Mammary epithelial cell (primary cell): ENCODE measurements at regions of chr5 and their contacts with region 1.

Region 1: DNA sequence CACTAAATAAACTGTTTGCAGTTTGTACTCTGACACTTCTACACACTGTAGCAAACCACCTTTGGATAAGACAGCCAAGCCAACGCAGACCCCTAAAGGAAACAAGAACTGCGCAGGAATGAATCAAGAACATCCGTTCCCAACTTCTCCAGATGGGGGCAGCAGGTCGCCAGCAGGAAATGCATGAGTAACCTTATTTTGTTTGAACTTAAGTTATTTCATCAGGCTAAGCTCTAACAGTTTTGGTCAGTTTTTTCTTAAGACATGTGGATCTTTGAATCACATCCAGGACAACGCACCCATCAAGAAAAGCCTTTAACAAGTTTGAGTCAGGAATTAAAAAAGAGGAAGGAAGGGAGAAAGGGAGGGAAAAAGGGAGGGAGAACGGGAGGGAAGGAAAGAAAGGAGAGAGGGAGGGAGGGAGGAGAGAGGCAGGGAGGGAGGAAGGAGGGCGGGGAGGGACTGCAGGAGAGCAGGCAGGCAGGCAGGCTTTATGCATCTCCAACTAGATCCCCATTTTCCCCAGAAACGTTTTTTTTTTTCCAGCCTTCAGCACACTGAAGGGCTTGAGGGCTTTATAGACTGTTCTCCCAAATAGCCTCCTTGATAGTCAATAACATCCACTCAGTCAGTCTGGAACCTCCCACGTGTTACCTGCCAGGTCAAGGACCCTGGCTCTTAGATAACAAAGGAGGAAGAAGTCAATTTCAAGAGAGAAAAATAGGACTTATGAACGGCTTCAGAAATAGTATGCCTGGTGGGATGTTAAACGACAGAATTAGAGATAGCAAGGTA is 22.2 kb downstream of the BHMT start:
- DNase-seq: peak; percentile 58
- H3K4me3 ChIP-seq: peak overlapping the region; percentile 16 to 28 (median 23)
- H3K27ac ChIP-seq: peak overlapping the region; percentile 13
- H3K4me1 ChIP-seq: peaks cover 5% of the 10 kb centered on the region
- H3K27me3 ChIP-seq: no peaks in the 10 kb centered on the region
- CTCF ChIP-seq: peak; percentile 84 to 88

Region 2: DNA sequence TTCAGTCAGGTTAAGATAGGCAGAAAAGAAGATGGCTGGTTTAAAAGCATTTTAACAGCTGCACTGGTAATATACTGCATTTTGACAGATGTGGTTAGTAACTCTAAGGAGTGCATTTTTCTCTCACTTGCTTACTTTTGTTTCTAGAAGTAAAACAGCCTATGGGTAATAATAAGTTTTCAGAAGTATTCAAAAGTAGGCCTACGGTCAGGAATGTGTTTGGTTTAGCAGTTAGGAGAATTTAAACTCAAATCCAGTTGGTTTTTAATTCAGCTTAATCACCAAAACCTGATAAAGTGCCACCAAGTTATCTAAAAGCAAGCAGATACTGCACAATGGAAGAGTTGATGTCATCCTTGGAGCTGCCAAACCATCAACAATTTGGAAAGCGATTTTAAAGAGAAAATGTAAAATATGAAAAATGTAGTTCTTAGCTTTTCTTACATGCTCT is 309.0 kb before region 1 on chr5:
- CTCF ChIA-PET with region 1: no interaction called
- dilution Hi-C with region 1: no loop called
- in situ Hi-C with region 1: no loop called
- intact Hi-C with region 1: no loop called
- DNase-seq: no peak
- H3K4me3 ChIP-seq: no peak overlapping the region
- H3K27ac ChIP-seq: no peak overlapping the region
- H3K4me1 ChIP-seq: no peaks in the 10 kb centered on the region
- H3K27me3 ChIP-seq: no peaks in the 10 kb centered on the region
- CTCF ChIP-seq: no peak

Region 3: GRCh38 chr5:78899922-78900362 is 233.9 kb before region 1 on chr5:
- CTCF ChIA-PET with region 1: interaction called, 4 read pairs
- dilution Hi-C with region 1: no loop called
- in situ Hi-C with region 1: no loop called
- intact Hi-C with region 1: loop called (anchors 5 kb)
- DNase-seq: peak; percentile 44
- H3K4me3 ChIP-seq: no peak overlapping the region
- H3K27ac ChIP-seq: no peak overlapping the region
- H3K4me1 ChIP-seq: no peaks in the 10 kb centered on the region
- H3K27me3 ChIP-seq: no peaks in the 10 kb centered on the region
- CTCF ChIP-seq: peak; percentile 79 to 83

Region 4: GRCh38 chr5:79020861-79021561 is 112.8 kb before region 1 on chr5:
- CTCF ChIA-PET with region 1: interaction called, 113 read pairs
- dilution Hi-C with region 1: no loop called
- in situ Hi-C with region 1: loop called (anchors 5 to 10 kb)
- intact Hi-C with region 1: loop called (anchors 1 kb)
- DNase-seq: peak; percentile 39
- H3K4me3 ChIP-seq: peak overlapping the region in 2 of 3 experiments; percentile 22 to 31
- H3K27ac ChIP-seq: no peak overlapping the region
- H3K4me1 ChIP-seq: peaks cover 15% of the 10 kb centered on the region
- H3K27me3 ChIP-seq: peaks cover 4% of the 10 kb centered on the region
- CTCF ChIP-seq: peak; percentile 86 to 88

Region 5: DNA sequence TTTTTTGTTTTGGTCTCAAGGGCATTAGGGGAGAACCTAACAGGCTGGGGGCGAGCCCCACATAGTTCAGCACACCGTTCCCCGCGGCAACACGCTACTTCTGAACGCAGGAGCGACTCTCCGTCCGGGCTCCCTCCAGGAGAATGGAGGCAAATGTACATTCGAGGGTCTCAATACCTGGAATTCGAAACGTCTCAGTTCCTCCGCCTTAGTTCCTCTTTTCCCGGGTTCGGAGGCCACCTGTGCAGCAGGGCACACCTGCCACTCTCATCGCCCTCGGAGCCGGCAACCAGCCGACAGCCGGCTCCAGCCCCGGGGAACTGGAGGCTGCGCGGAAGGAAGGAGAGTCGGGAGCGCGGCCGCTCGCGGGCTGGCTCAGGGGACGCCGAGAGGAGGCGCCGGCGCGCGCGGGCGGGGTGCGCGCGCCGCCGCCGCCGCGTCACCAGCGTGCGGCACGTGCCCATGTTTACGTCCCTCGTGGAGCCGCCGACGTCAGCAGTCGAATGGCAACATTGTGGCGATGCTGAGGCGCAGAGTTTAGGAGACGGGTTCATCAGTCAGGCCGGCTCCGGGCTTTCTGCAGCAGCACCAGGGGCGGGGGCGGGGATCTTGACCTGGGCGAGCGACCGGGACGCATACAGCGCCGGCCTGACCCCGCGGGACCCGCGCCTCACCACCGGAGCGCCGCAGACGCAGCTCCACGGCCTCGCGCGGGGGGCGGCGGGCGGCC is 101.9 kb after region 1 on chr5 and contains the start of gene JMY:
- CTCF ChIA-PET with region 1: no interaction called
- dilution Hi-C with region 1: no loop called
- in situ Hi-C with region 1: loop called in 1 of 2 experiments (anchors 10 kb)
- intact Hi-C with region 1: loop called (anchors 1 kb)
- DNase-seq: peak; percentile 80
- H3K4me3 ChIP-seq: peak within 1 kb of the TSS; percentile 68 to 90 (median 87)
- H3K27ac ChIP-seq: peak within 1 kb of the TSS; percentile 76
- H3K4me1 ChIP-seq: no peaks in the 10 kb centered on the region
- H3K27me3 ChIP-seq: no peaks in the 10 kb centered on the region
- CTCF ChIP-seq: no peak
- total RNA-seq, gene JMY: 7.5 to 16.8 TPM

Region 6: DNA sequence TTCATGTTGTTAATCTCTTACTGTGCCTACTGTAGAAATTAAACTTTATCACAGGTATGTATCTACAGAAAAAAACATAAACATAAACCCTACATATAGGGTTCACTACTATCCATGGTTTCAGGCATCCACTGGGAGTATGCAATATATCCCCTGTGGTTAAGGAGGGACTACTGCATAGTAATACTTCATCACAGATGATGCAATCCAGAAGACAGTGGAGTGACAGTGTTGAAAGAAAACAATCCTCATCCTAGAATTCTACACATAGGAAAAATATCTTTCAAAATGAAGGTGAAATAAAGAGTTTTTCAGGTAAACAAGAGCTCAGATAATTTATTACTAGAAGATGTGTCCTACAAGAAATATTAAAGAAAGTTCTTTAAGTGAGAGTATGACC is 274.2 kb after region 1 on chr5:
- CTCF ChIA-PET with region 1: no interaction called
- dilution Hi-C with region 1: no loop called
- in situ Hi-C with region 1: no loop called
- intact Hi-C with region 1: no loop called
- DNase-seq: peak; percentile 7
- H3K4me3 ChIP-seq: no peak overlapping the region
- H3K27ac ChIP-seq: no peak overlapping the region
- H3K4me1 ChIP-seq: no peaks in the 10 kb centered on the region
- H3K27me3 ChIP-seq: no peaks in the 10 kb centered on the region
- CTCF ChIP-seq: no peak

Region 7: GRCh38 chr5:79464695-79465332 is 331.0 kb after region 1 on chr5:
- CTCF ChIA-PET with region 1: interaction called, 6 read pairs
- dilution Hi-C with region 1: no loop called
- in situ Hi-C with region 1: loop called (anchors 10 kb)
- intact Hi-C with region 1: loop called (anchors 1 kb)
- DNase-seq: peak; percentile 2
- H3K4me3 ChIP-seq: no peak overlapping the region
- H3K27ac ChIP-seq: no peak overlapping the region
- H3K4me1 ChIP-seq: no peaks in the 10 kb centered on the region
- H3K27me3 ChIP-seq: no peaks in the 10 kb centered on the region
- CTCF ChIP-seq: peak; percentile 51 to 66

Region 8: DNA sequence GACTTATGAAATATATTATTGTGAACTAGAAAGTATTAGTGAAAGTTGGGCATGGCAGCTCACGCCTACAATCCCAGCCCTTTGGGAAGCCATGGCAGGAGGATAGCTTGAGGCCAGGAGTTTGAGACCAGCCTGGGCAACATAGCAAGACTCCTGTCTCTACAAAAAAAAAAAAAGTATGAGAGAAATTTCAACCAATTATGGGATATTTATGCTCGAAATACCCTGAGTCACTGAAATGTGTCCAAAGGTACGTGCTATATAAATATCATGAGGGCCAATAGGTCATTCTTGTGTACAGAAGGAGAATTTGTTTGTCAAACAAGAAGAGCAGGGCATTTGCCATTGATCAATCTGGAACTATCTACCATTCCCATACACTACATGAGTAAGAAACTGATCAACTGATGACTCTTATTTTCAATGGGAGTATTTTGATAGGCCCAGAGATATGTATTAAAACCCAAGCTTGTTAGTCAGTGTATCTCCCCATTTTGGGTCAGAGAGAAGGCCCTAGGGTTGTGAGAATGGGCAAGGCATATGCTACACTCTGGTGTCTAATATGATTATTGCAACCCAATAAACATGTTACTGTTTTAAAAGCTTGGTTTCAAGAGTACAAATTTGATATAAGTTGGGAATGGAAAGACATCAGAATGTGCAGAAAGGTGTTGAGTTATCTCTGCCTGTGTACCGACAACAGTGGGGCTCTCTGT is 401.8 kb after region 1 on chr5:
- CTCF ChIA-PET with region 1: no interaction called
- dilution Hi-C with region 1: no loop called
- in situ Hi-C with region 1: no loop called
- intact Hi-C with region 1: loop called (anchors 5 kb)
- DNase-seq: no peak
- H3K4me3 ChIP-seq: no peak overlapping the region
- H3K27ac ChIP-seq: no peak overlapping the region
- H3K4me1 ChIP-seq: no peaks in the 10 kb centered on the region
- H3K27me3 ChIP-seq: no peaks in the 10 kb centered on the region
- CTCF ChIP-seq: peak in 1 of 2 donors; percentile 34

Region 9: GRCh38 chr5:80083101-80083890 is 949.4 kb after region 1 on chr5:
- CTCF ChIA-PET with region 1: no interaction called
- dilution Hi-C with region 1: no loop called
- in situ Hi-C with region 1: no loop called
- intact Hi-C with region 1: loop called (anchors 5 kb)
- DNase-seq: peak; percentile 52
- H3K4me3 ChIP-seq: peak overlapping the region in 2 of 3 experiments; percentile 1 to 14
- H3K27ac ChIP-seq: no peak overlapping the region
- H3K4me1 ChIP-seq: no peaks in the 10 kb centered on the region
- H3K27me3 ChIP-seq: no peaks in the 10 kb centered on the region
- CTCF ChIP-seq: peak; percentile 61 to 64